Caki2 (cell line): ENCODE measurements at regions of chr15 and their contacts with region 1.

Region 1: GRCh38 chr15:40217159-40217824 is 21.6 kb upstream of the PAK6 start:
- DNase-seq: peak; percentile 58

Region 2: DNA sequence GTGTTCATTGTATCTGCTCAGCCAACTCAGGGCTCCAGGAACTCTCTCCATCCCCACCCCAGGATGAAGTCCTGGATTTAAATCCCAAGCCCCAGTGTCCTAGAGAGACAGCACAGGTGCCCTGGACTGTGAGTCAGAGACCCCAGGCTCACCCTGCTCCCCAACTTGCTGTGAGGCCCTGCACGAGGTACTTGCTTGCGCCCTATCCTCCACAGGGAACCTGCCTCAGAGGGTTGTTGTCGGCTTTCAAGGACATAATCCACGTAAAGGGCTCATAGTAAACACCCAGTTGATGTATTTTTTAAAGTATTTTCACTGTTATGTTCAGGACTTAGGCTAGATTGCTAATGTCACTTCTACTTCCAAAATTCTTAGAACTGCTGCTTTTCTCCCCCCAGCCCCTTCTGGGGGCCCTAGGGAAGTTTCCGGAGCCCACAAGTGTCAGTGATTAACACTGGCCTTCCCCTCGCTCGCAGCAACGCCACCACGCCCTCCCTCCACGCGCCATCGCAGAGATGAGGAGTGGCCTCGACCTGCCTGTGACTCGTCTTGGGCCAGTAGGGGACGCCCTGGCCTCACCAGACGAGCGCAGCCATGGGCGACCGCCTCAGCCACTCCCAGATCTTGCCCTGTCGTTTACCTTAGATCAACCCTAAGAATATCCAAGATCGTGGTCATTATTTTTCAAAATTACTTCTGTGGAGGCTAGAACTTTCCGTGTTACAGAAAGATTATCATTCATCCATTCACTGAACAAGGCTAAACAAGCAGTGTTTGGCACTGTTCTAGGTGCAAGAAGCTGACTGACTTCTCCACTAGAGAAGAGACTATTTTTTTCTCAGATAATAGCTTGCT is 172.3 kb before region 1 on chr15:
- in situ Hi-C with region 1: loop called (anchors 25 kb)
- DNase-seq: peak; percentile 78